Posterior cingulate gyrus (tissue), 11 donors: ENCODE measurements at regions of chr2 and their contacts with region 1.

Region 1: DNA sequence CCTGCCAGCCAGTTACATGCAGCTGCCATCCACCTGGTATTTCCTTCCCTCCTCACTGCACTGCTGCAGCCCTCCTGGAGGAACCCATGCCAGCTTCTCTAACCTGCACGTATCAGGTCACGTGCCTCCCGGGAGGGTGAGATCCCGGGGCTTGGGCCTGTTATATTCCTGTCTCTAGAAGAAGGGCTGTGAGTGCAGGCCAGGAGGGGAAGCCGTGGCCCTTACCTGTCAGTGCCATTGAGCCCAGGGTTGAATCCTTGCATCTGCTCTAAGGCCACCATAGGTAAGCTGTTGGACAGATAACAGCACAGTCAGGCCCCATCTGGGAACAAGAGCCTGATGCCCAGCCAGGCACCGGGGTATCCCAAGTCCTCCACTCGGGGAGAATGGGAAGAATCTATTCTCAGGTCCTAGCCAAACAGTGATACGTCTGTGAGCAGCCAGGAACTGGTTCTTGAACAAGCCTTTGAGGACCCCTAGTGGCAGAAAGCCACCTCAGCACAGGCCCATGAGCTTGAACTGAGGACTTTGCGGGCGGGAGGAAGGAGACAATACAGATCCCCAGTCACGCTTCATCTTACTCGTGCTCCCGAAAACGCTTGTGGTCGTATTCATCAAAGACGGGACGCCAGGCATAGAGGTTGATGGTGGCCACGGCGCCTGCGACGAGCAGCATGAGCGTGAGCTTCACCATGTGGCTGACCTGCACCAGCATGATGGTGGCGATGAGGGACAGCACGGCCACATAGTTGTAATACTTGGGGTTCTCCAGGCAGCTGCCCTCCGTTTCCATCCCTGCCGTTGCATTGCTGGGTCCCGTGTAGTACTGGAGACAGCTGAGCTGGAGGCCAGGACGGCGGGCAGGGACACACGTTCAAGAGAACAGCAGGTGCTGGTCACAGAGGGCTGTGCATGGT is 34.4 kb downstream of the CENPO start:
- DNase-seq: peak; percentile 74 to 97 (median 86)

Region 2: GRCh38 chr2:24228470-24228869 is 599.1 kb before region 1 on chr2:
- intact Hi-C with region 1: loop called (anchors 10 kb)
- DNase-seq: no peak

Region 3: GRCh38 chr2:24399434-24400206 is 428.0 kb before region 1 on chr2:
- intact Hi-C with region 1: no loop called
- DNase-seq: no peak

Region 4: GRCh38 chr2:24409700-24410556 is 417.7 kb before region 1 on chr2:
- intact Hi-C with region 1: loop called (anchors 1 kb)
- DNase-seq: peak in 2 of 10 donors; percentile 26 to 39

Region 5: DNA sequence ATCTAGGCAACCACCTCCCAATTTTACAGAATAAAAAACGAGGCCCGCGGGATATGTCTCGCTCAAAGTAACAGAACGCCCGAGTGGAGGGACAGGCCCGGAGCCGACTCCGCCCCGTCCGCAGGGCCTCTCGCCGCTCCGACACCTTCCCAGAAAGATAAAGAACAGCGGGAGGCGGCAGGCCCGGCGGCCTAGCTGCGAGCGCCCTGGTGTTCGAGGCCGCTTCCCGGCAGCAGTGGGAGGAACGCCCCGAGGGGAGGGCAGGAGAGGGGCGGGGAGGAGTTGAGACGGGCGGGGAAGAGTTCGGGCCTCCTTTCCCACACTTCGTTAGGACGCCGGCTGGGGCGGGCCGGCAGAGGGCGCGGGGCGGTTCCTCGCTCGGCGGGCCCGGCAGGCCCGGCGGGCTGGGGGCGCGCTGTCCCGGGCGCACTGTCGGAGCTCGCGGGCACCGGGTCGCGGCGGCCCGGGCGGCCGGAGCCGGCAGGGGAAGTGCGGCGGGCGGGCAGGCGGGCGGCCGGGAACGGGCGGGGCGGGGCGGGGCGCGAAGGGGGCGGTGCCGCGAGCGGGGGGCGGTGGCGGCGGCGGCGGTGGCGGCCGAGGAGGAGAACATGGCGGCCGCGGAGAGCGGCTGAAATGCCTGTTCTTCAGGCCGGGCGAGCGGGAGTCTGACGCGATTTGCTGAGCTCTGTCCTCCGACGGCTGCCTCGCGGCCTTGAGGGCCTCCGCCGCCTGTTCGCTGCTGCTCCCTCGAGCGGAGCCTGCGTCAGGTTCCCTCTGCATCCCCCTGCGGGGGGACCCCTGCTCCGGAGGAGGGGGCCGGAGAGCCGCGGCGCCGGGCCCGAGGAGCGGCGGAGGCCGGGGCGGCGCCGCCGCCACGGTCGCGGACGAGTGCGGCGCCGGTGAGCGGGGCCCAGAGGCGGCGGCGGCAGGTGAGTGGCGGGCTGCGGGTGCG is 336.6 kb before region 1 on chr2 and contains the start of gene NCOA1:
- intact Hi-C with region 1: loop called (anchors 5 kb)
- DNase-seq: peak; percentile 75 to 98 (median 86)